Psoas muscle (tissue), 8 donors: ENCODE measurements at regions of chr17 and their contacts with region 1.

Region 1: GRCh38 chr17:15409721-15410250 is 57.6 kb downstream of the CDRT4 start:
- DNase-seq: peak in 1 of 2 donors; percentile 52
- ATAC-seq: peak; percentile 19 to 39 (median 30)
- H3K4me3 ChIP-seq: no peak overlapping the region
- H3K27ac ChIP-seq: peak overlapping the region; percentile 68
- H3K4me1 ChIP-seq: peaks cover 16% of the 10 kb centered on the region
- H3K27me3 ChIP-seq: no peaks in the 10 kb centered on the region
- CTCF ChIP-seq: no peak

Region 2: DNA sequence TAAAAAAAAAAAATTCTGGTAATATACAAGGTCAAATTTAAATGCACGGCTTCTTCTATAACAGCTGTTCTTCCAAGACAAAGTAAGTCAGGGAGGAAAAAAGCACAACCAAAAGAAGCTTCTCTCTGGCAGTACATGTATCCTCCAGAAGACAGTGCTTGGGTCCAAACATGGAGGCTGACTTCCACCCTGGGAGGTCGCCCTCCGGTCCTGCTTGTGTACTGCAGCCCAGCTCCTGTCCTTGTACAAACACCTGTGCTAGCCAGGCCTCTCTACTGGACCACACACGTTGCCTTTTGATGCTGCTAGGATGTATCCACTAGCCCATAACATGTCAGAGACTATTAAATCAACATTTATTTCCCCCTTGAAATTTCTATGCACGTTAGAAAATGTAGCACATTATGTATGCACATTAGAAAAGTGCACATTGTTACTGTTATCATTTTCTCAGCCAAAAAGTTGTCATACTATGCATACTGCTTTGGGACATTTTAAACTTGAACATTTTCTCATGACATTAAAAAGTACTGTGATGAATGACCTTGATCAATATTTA is 90.3 kb before region 1 on chr17:
- intact Hi-C with region 1: loop called in 1 of 2 experiments (anchors 5 kb)
- DNase-seq: no peak
- ATAC-seq: no peak
- H3K4me3 ChIP-seq: no peak overlapping the region
- H3K27ac ChIP-seq: no peak overlapping the region
- H3K4me1 ChIP-seq: peaks cover 17% of the 10 kb centered on the region
- H3K27me3 ChIP-seq: no peaks in the 10 kb centered on the region
- CTCF ChIP-seq: no peak

Region 3: GRCh38 chr17:15456972-15457722 is 47.4 kb after region 1 on chr17:
- intact Hi-C with region 1: loop called in 1 of 2 experiments (anchors 2 kb)
- DNase-seq: peak; percentile 88 to 94
- ATAC-seq: peak; percentile 87 to 93 (median 88)
- H3K4me3 ChIP-seq: peak overlapping the region; percentile 9
- H3K27ac ChIP-seq: peak overlapping the region; percentile 90
- H3K4me1 ChIP-seq: peaks cover 28% of the 10 kb centered on the region
- H3K27me3 ChIP-seq: no peaks in the 10 kb centered on the region
- CTCF ChIP-seq: peak; percentile 49

Region 4: GRCh38 chr17:15502369-15503112 is 92.8 kb after region 1 on chr17:
- intact Hi-C with region 1: loop called in 1 of 2 experiments (anchors 5 kb)
- DNase-seq: peak; percentile 92 to 96
- ATAC-seq: peak; percentile 92 to 95 (median 94)
- H3K4me3 ChIP-seq: peak overlapping the region; percentile 42
- H3K27ac ChIP-seq: peak overlapping the region; percentile 54
- H3K4me1 ChIP-seq: peaks cover 11% of the 10 kb centered on the region
- H3K27me3 ChIP-seq: no peaks in the 10 kb centered on the region
- CTCF ChIP-seq: peak; percentile 84